Sigmoid colon (tissue), 7 donors: ENCODE measurements at regions of chr3 and their contacts with region 1.

Region 1: DNA sequence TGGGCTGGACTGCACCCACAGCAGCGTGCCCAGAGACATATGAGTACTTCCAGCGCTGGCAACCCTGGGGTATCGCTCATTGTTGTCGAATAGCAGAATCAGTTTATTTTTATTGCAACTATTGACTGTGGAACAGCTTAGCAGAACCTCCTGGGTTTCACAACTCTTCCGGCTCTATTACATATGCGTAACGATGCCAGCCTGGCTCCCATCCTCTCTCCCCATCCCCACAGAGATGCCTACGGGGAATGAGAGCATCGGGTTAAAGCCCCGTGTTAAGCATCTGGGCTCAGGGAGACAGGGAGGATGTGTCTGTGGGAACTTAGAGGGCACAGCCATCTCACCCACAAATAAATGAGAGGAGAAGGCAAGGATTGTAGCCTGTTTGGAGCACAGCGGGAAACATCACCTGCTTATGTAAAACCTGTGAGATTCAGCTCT is 76.6 kb upstream of the DLG1 start:
- DNase-seq: peak; percentile 20
- H3K4me3 ChIP-seq: no peak overlapping the region
- H3K27ac ChIP-seq: no peak overlapping the region
- H3K4me1 ChIP-seq: peaks cover 0 to 16% (median 14%) of the 10 kb centered on the region in 4 donors
- H3K27me3 ChIP-seq: no peaks in the 10 kb centered on the region
- CTCF ChIP-seq: no peak
- EP300 ChIP-seq: no peak
- POLR2A ChIP-seq: no peak

Region 2: DNA sequence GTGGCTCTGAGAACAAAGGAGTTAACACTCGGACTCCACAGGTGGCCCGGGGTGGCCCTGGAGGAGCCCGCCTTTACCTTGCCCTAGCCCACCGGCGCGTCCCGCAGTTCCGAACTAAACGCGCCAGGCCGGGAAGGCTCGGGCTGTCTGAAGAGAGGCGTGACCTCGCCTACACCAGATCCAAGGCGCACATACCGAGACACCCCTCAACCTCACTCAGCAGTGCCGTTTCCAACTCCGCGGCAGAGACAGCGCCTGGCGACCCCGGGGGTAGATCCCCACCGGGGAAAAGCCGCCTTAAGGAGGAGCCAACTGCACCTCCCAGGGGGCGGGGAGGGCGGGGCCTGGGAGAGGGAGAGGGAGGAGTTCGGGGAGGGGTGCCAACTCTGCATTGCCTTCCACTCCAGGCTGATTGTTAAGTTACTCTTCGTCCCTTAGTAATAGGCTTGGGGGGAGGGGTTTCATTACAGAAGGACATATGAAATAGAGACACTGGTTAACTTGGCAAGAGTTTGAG is 76.6 kb before region 1 on chr3 and contains the start of gene DLG1:
- intact Hi-C with region 1: loop called (anchors 5 kb)
- DNase-seq: peak; percentile 93
- H3K4me3 ChIP-seq: peak within 1 kb of the TSS; percentile 74 to 95 (median 92)
- H3K27ac ChIP-seq: peak within 1 kb of the TSS; percentile 88 to 95 (median 93)
- H3K4me1 ChIP-seq: peaks cover 0 to 34% (median 21%) of the 10 kb centered on the region in 4 donors
- H3K27me3 ChIP-seq: no peaks in the 10 kb centered on the region
- CTCF ChIP-seq: no peak
- EP300 ChIP-seq: no peak
- POLR2A ChIP-seq: peak; percentile 38 to 69
- total RNA-seq, gene DLG1: 62.6 to 71.0 (median 66.9) TPM

Region 3: DNA sequence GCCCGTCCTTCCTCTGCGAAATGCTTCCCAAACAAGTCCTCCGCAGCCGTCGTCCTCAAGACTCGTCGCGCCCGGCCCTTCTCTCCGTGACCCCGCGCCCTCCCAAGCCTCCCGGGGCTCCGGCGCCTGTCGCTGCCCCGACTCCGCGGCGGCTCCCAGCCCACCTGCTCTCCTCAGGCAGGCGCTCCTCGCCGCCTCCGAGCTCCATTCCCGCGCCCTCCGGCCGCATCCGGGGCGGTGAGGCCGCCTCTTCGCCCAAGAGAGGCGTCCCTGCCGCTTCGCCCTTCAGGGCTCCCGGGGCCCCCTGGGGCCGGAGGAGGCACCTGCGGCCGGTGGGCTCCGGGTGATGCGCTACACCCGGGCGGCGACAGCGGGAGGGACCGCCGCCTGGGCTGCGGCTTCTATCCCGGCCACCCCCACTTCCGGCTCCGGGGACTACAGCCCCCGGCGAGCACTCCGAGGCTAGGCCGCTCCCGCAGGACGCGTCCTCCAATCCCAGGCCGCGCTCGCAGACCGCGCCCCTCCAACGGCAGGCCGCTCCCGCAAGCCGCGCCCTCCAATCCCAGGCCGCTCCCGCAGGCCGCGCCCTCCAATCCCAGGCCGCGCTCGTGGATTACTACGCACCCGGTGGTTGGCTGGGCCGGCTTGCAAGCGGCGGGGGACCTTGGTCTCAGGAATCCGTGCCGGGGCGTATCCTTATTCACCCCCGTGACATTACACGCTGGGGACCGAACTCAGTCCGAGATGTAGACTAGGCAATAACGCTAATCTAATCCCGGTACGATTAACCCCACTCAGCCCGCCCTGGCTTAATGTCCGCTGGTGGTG is 361.7 kb after region 1 on chr3 and contains the start of gene RUBCN:
- intact Hi-C with region 1: no loop called
- DNase-seq: peak; percentile 97
- H3K4me3 ChIP-seq: peak within 1 kb of the TSS; percentile 84 to 98 (median 96)
- H3K27ac ChIP-seq: peak within 1 kb of the TSS; percentile 86 to 95 (median 92)
- H3K4me1 ChIP-seq: peaks cover 0 to 22% (median 22%) of the 10 kb centered on the region in 4 donors
- H3K27me3 ChIP-seq: no peaks in the 10 kb centered on the region
- CTCF ChIP-seq: no peak
- EP300 ChIP-seq: no peak
- POLR2A ChIP-seq: peak; percentile 57 to 72
- total RNA-seq, gene RUBCN: 35.2 to 41.8 (median 36.6) TPM